CD8-positive, alpha-beta memory T cell (primary cell): ENCODE measurements at regions of chr17 and their contacts with region 1.

Region 1: DNA sequence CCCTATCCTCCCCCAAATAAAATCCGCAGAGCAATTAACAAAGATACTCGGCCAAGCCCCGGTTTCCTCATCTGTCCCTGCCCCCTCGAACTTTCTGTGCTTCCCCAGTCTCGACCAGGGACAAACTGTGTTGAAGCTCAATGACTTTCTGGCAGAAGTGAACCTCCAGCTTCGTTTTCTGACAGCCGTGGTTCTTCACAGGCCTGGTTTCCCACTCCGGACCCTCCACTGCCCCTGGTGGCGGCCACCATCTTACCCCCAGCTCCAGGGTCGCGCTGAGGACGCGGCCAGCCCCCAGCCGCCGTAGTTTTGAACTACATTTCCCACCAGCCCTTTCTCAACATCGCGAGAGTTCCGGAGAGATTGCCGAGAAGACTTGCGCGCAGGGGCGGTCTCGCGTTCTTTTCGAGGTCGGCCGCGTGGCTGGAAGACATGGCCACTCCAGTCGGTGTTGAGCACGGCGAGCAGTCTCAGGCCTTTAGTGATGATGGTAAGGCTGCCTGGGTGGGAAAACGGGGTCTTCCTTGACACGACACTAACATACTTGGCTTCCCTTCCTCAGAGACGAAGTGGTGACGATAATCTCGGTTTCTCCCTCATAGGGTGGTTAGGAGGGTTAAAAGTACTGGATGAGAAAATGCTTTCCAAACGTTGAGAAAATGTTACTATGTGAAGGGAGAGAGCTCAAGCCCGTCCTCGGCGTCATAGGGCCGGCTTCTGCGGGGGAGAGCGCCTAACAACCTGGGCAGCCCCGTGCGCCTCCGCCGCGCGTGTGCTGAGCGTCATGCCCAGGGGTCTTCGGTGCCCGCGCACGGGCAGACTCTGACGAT is 17.7 kb downstream of the PRCD start:
- DNase-seq: peak; percentile 85 to 96 (median 93)
- H3K4me3 ChIP-seq: peak overlapping the region; percentile 76
- H3K4me3 Mint-ChIP-seq: peak overlapping the region; percentile 97 to 99 (median 99)
- H3K27ac ChIP-seq: peak overlapping the region; percentile 91
- H3K27ac Mint-ChIP-seq: peak overlapping the region; percentile 96 to 100 (median 99)
- H3K4me1 ChIP-seq: peaks cover 49% of the 10 kb centered on the region
- H3K4me1 Mint-ChIP-seq: peaks cover 63 to 71% (median 67%) of the 10 kb centered on the region in 3 donors
- H3K27me3 ChIP-seq: no peaks in the 10 kb centered on the region
- H3K27me3 Mint-ChIP-seq: no peaks in the 10 kb centered on the region

Region 2: DNA sequence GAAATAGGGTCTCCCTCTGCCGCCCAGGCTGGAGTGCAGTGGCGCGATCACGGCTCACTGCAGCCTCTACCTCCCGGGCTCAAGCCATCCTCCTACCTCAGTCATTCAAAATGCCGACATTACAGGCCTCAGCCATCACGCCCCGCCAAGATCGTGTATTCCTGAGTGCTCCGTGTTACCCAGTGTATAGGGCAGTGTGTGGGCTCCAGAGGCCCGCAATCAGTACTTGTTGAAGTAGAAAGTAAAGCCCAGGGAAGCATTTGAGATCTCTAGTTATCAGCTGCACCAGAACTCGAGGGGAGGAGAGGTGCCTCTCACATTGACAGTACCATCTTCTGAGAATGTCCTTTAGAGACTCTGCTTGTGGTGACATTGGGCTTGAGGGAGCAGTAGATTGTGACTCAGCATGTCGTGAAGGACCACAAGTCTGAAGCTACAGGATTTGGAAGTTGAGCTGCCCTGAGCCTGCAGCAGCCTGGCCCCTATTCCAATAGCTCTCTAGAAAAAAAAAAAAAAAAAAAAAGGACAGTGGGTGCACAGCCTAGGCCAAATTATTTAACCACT is 202.8 kb before region 1 on chr17:
- CTCF ChIA-PET with region 1: no interaction called
- POLR2A ChIA-PET with region 1: no interaction called
- DNase-seq: no peak
- H3K4me3 ChIP-seq: no peak overlapping the region
- H3K4me3 Mint-ChIP-seq: peak overlapping the region; percentile 54 to 99 (median 95)
- H3K27ac ChIP-seq: no peak overlapping the region
- H3K27ac Mint-ChIP-seq: peak overlapping the region in 1 of 8 donors; percentile 75
- H3K4me1 ChIP-seq: peaks cover 9% of the 10 kb centered on the region
- H3K4me1 Mint-ChIP-seq: peaks cover 18 to 29% (median 24%) of the 10 kb centered on the region in 3 donors
- H3K27me3 ChIP-seq: no peaks in the 10 kb centered on the region
- H3K27me3 Mint-ChIP-seq: peaks cover 0 to 4% of the 10 kb centered on the region in 2 donors

Region 3: GRCh38 chr17:76547184-76547641 is 10.4 kb before region 1 on chr17:
- CTCF ChIA-PET with region 1: interaction called, 17 read pairs
- POLR2A ChIA-PET with region 1: interaction called, 5 read pairs
- DNase-seq: peak; percentile 28 to 76 (median 55)
- H3K4me3 ChIP-seq: no peak overlapping the region
- H3K4me3 Mint-ChIP-seq: no peak overlapping the region
- H3K27ac ChIP-seq: no peak overlapping the region
- H3K27ac Mint-ChIP-seq: no peak overlapping the region
- H3K4me1 ChIP-seq: peaks cover 7% of the 10 kb centered on the region
- H3K4me1 Mint-ChIP-seq: peaks cover 0 to 2% (median 0%) of the 10 kb centered on the region in 3 donors
- H3K27me3 ChIP-seq: no peaks in the 10 kb centered on the region
- H3K27me3 Mint-ChIP-seq: peaks cover 5 to 11% of the 10 kb centered on the region in 2 donors

Region 4: GRCh38 chr17:76567634-76568432 is 10.2 kb after region 1 on chr17:
- CTCF ChIA-PET with region 1: interaction called, 37 read pairs
- POLR2A ChIA-PET with region 1: interaction called, 7 read pairs
- DNase-seq: peak in 1 of 5 donors; percentile 21
- H3K4me3 ChIP-seq: no peak overlapping the region
- H3K4me3 Mint-ChIP-seq: peak overlapping the region in 5 of 7 donors; percentile 32 to 58 (median 52)
- H3K27ac ChIP-seq: no peak overlapping the region
- H3K27ac Mint-ChIP-seq: peak overlapping the region; percentile 63 to 93 (median 84)
- H3K4me1 ChIP-seq: peaks cover 12% of the 10 kb centered on the region
- H3K4me1 Mint-ChIP-seq: peaks cover 35 to 47% (median 41%) of the 10 kb centered on the region in 3 donors
- H3K27me3 ChIP-seq: no peaks in the 10 kb centered on the region
- H3K27me3 Mint-ChIP-seq: no peaks in the 10 kb centered on the region

Region 5: DNA sequence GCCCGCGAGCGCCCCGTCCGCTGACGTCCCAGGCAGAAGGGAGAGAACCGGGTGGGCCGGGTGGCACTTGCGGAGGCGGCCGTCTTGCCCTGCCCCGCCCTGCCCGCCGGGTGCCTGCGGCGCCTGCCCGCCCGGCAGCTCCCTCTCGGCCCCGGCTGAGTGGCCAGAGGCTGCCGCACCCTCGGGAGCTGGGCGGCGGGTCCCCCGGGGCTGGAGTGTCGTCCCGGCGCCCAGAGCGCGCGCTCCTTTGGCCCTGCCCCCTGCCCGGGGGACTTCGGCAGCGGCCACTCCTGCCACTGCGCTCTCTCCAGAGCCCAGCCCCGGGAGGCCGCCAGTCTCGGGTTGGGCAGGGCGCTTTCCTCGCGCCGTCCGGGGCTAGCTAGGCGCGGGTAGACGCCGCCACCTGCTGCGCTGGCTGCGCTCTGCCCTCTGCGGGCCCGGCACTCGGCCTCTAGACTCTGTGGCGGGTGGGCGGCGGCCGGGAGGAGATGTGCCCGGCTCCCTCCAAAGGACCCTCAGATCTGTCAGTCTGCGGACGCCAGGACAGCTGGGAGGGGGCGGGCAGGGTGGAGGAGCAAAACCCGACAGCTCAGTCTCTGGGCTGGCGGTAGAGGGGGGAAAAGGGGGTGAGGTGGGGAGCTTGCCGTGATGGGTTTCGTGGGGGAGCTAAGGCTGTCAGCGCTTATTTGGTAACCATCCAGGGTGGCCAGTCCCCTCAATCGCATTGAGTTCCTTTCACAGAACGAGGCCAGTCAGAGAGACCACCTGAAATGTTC is 28.4 kb after region 1 on chr17 and contains the start of gene ST6GALNAC2:
- CTCF ChIA-PET with region 1: interaction called, 19 read pairs
- POLR2A ChIA-PET with region 1: interaction called, 5 read pairs
- DNase-seq: peak; percentile 18 to 74 (median 41)
- H3K4me3 ChIP-seq: peak within 1 kb of the TSS; percentile 39
- H3K4me3 Mint-ChIP-seq: peak within 1 kb of the TSS; percentile 67 to 88 (median 75)
- H3K27ac ChIP-seq: no peak within 1 kb of the TSS
- H3K27ac Mint-ChIP-seq: peak within 1 kb of the TSS in 2 of 8 donors; percentile 43 to 87
- H3K4me1 ChIP-seq: peaks cover 10% of the 10 kb centered on the region
- H3K4me1 Mint-ChIP-seq: peaks cover 0 to 24% (median 9%) of the 10 kb centered on the region in 3 donors
- H3K27me3 ChIP-seq: peaks cover 16% of the 10 kb centered on the region
- H3K27me3 Mint-ChIP-seq: peaks cover 43 to 48% of the 10 kb centered on the region in 2 donors
- total RNA-seq, gene ST6GALNAC2: 0.83 to 1.0 TPM

Region 6: DNA sequence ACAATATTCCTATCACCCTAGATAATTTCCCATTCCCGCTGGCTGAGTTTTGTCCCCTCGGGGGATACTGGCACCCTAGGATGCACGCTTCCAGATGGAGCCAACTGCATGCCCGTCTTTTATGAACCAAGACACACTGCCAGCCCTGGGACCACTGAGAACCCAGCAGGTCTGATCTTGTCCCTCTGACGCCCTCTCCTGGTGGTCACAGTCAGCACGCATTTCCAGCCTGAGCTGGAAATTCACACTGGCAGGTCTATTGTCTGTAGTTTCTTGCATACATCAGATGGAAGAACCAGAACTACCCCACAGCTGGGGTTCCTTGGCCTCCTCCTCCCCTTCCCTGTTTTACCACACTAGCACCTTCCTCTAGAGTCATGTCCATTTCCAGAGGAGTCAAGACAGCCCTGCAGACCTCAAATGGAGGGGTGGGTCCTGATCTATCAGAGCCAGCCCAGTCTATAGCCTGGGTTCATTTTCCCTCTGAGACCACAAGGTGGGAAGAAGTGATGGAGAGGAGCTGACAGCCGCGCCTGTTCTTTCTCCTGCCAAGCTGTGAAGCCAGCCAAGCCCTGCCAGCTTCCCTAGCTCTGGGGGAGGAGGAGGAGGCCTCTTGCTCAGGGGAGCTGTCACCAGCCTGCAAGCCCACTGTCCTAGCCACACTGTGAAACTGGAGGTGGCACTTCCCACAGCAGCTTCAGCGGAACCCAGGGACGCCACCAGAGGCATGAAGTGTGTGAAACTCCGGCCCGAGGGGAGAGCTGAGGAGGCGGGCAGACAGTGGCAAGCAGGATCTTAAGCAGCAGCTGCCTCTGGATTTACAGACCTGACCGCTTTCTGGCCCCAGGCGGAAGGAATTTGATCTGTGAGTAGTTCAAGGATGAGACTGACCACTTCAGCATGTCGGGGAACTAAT is 123.9 kb after region 1 on chr17:
- CTCF ChIA-PET with region 1: interaction called, 23 read pairs
- POLR2A ChIA-PET with region 1: no interaction called
- DNase-seq: peak; percentile 57 to 80 (median 62)
- H3K4me3 ChIP-seq: no peak overlapping the region
- H3K4me3 Mint-ChIP-seq: peak overlapping the region in 2 of 7 donors; percentile 61 to 85
- H3K27ac ChIP-seq: no peak overlapping the region
- H3K27ac Mint-ChIP-seq: peak overlapping the region in 7 of 8 donors; percentile 37 to 89 (median 66)
- H3K4me1 ChIP-seq: peaks cover 33% of the 10 kb centered on the region
- H3K4me1 Mint-ChIP-seq: peaks cover 15 to 18% (median 18%) of the 10 kb centered on the region in 3 donors
- H3K27me3 ChIP-seq: no peaks in the 10 kb centered on the region
- H3K27me3 Mint-ChIP-seq: no peaks in the 10 kb centered on the region

Region 7: GRCh38 chr17:76701471-76701967 is 143.9 kb after region 1 on chr17:
- CTCF ChIA-PET with region 1: no interaction called
- POLR2A ChIA-PET with region 1: no interaction called
- DNase-seq: no peak
- H3K4me3 ChIP-seq: no peak overlapping the region
- H3K4me3 Mint-ChIP-seq: no peak overlapping the region
- H3K27ac ChIP-seq: no peak overlapping the region
- H3K27ac Mint-ChIP-seq: peak overlapping the region in 4 of 8 donors; percentile 31 to 81 (median 37)
- H3K4me1 ChIP-seq: no peaks in the 10 kb centered on the region
- H3K4me1 Mint-ChIP-seq: peaks cover 0 to 34% (median 13%) of the 10 kb centered on the region in 3 donors
- H3K27me3 ChIP-seq: no peaks in the 10 kb centered on the region
- H3K27me3 Mint-ChIP-seq: no peaks in the 10 kb centered on the region